CD4-positive, alpha-beta T cell (primary cell): ENCODE measurements at regions of chr13 and their contacts with region 1.

Region 1: DNA sequence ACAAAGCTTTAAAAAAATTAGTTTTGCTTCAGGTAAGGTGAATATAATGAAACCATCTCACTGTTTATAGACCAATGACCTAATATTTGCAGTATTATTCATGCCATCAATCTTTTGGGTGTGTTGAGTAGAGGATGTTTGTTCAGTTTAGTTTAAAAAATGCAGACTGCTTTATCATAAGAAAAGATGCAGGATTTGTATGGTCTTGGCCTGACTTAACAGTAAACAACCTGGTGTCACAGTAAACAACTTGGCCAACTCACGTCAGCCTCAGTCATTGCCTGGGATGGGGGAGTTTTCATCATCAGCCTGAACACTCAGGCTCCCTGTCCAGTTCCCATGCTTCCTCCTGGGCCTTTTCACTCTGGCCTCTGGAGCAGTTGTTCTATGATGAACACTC is 55.1 kb downstream of the LMO7 start:
- DNase-seq: no peak
- ATAC-seq: no peak
- H3K4me3 ChIP-seq: no peak overlapping the region
- H3K4me3 Mint-ChIP-seq: no peak overlapping the region
- H3K27ac ChIP-seq: no peak overlapping the region
- H3K27ac Mint-ChIP-seq: no peak overlapping the region
- H3K4me1 ChIP-seq: no peaks in the 10 kb centered on the region
- H3K4me1 Mint-ChIP-seq: no peaks in the 10 kb centered on the region
- H3K27me3 ChIP-seq: no peaks in the 10 kb centered on the region
- H3K27me3 Mint-ChIP-seq: no peaks in the 10 kb centered on the region
- CTCF ChIP-seq: no peak

Region 2: GRCh38 chr13:75704579-75705320 is 13.6 kb after region 1 on chr13:
- CTCF ChIA-PET with region 1: interaction called, 10 read pairs
- POLR2A ChIA-PET with region 1: no interaction called
- intact Hi-C with region 1: no loop called
- DNase-seq: no peak
- ATAC-seq: no peak
- H3K4me3 ChIP-seq: no peak overlapping the region
- H3K4me3 Mint-ChIP-seq: no peak overlapping the region
- H3K27ac ChIP-seq: no peak overlapping the region
- H3K27ac Mint-ChIP-seq: no peak overlapping the region
- H3K4me1 ChIP-seq: no peaks in the 10 kb centered on the region
- H3K4me1 Mint-ChIP-seq: peaks cover 7% of the 10 kb centered on the region
- H3K27me3 ChIP-seq: no peaks in the 10 kb centered on the region
- H3K27me3 Mint-ChIP-seq: no peaks in the 10 kb centered on the region
- CTCF ChIP-seq: no peak

Region 3: DNA sequence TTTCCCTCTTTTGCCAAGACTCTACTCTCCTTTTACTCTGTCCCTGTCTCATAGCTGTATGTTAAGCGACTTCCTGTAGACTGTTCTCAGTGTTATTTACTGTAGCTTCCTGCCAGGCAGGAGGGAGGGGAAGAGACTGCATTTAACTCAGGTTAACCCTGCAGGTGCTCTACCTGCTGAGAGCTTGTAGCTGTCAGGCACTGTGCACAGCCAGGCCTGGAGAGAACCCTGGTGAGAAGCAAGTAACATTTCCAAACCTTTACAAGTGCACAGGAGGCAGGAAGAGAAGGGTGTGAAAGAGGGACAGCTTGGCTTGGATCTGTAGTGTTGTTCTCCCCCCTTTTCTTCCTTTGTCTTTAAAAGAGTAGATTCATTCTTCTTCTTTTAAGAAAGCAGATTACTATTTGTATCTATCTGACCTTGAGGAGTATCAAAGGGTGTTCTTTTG is 112.0 kb after region 1 on chr13:
- CTCF ChIA-PET with region 1: no interaction called
- POLR2A ChIA-PET with region 1: no interaction called
- intact Hi-C with region 1: loop called in 1 of 2 experiments (anchors 5 kb)
- DNase-seq: peak in 12 of 14 experiments; percentile 1 to 57 (median 29)
- ATAC-seq: peak; percentile 99
- H3K4me3 ChIP-seq: no peak overlapping the region
- H3K4me3 Mint-ChIP-seq: peak overlapping the region; percentile 31
- H3K27ac ChIP-seq: peak overlapping the region; percentile 5 to 35
- H3K27ac Mint-ChIP-seq: peak overlapping the region; percentile 82
- H3K4me1 ChIP-seq: peaks cover 9% of the 10 kb centered on the region
- H3K4me1 Mint-ChIP-seq: peaks cover 49% of the 10 kb centered on the region
- H3K27me3 ChIP-seq: no peaks in the 10 kb centered on the region
- H3K27me3 Mint-ChIP-seq: no peaks in the 10 kb centered on the region
- CTCF ChIP-seq: no peak

Region 4: GRCh38 chr13:75870397-75870903 is 179.3 kb after region 1 on chr13:
- CTCF ChIA-PET with region 1: interaction called, 13 read pairs
- POLR2A ChIA-PET with region 1: interaction called, 8 read pairs
- intact Hi-C with region 1: loop called (anchors 2 kb)
- DNase-seq: peak in 7 of 14 experiments; percentile 2 to 63 (median 39)
- ATAC-seq: peak; percentile 64
- H3K4me3 ChIP-seq: peak overlapping the region; percentile 44
- H3K4me3 Mint-ChIP-seq: peak overlapping the region; percentile 79
- H3K27ac ChIP-seq: peak overlapping the region; percentile 34 to 50
- H3K27ac Mint-ChIP-seq: peak overlapping the region; percentile 80
- H3K4me1 ChIP-seq: peaks cover 7% of the 10 kb centered on the region
- H3K4me1 Mint-ChIP-seq: peaks cover 17% of the 10 kb centered on the region
- H3K27me3 ChIP-seq: peaks cover 0 to 4% of the 10 kb centered on the region in 2 experiments
- H3K27me3 Mint-ChIP-seq: peaks cover 4% of the 10 kb centered on the region
- CTCF ChIP-seq: peak; percentile 86

Region 5: DNA sequence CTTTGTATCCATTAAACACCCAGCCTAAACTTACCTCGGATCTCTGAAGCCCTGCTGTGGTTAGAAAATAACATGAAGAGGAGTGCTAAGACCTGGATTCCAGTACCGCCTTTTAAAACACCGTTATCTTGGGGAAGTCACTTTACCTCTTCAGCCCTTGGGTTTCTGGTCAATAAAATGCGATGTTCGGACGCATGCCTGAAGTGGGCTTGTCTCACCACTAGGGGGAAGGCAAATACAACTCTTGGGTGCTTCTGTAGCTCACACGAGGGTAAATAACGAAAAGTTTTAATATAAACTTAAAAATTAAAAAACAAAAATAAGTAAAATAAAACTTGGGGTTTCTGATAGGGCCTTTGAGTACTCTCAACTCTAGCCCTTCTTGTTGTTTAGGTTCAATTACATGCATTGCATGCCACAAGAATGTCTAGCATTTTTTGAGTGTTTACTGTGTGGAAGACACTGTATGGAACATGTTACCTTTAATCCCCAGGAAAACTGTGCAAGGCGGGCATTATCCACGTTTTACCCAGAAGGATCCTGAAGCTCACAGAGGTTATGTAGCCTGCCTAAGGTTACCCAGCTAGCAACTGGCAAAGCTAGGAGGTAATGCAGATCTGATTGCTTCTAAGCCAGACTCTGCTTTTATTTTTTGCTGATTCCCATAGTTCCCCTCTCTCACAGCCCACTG is 185.3 kb after region 1 on chr13:
- CTCF ChIA-PET with region 1: interaction called, 13 read pairs
- POLR2A ChIA-PET with region 1: no interaction called
- intact Hi-C with region 1: loop called (anchors 2 kb)
- DNase-seq: peak; percentile 13 to 76 (median 32)
- ATAC-seq: peak; percentile 93
- H3K4me3 ChIP-seq: no peak overlapping the region
- H3K4me3 Mint-ChIP-seq: peak overlapping the region; percentile 52
- H3K27ac ChIP-seq: no peak overlapping the region
- H3K27ac Mint-ChIP-seq: no peak overlapping the region
- H3K4me1 ChIP-seq: peaks cover 10% of the 10 kb centered on the region
- H3K4me1 Mint-ChIP-seq: peaks cover 15% of the 10 kb centered on the region
- H3K27me3 ChIP-seq: no peaks in the 10 kb centered on the region
- H3K27me3 Mint-ChIP-seq: peaks cover 4% of the 10 kb centered on the region
- CTCF ChIP-seq: peak; percentile 89

Region 6: DNA sequence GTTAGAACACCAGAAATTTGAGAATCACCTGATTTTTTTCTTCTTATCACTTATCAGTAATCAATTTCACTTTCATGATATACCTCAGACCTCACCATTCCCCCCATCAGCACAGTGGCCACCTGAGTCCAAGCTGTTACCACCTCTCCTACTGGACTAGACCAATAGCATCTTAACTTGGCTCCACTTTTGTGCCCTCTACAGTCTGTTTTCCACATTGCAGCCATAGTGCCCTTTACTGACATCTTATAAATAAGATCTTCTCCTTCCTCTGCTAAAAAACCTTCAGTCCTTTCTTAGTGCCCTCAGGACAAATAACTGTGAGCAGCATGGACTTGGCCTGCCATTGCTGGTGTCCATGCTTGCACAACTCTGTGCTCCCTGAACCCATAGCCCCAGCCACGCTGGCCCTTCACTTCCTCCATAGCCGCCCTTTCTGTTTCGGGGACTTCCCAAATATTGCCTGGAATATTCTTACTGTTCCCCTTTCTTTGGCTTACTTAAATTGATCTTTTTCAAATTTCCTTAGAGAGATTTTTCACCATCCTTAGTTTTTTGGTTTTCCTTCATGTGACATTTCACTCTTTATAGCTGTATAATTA is 325.7 kb after region 1 on chr13:
- CTCF ChIA-PET with region 1: interaction called, 3 read pairs
- POLR2A ChIA-PET with region 1: no interaction called
- intact Hi-C with region 1: loop called (anchors 2 to 5 kb)
- DNase-seq: peak in 4 of 14 experiments; percentile 3 to 25 (median 13)
- ATAC-seq: no peak
- H3K4me3 ChIP-seq: no peak overlapping the region
- H3K4me3 Mint-ChIP-seq: no peak overlapping the region
- H3K27ac ChIP-seq: no peak overlapping the region
- H3K27ac Mint-ChIP-seq: no peak overlapping the region
- H3K4me1 ChIP-seq: no peaks in the 10 kb centered on the region
- H3K4me1 Mint-ChIP-seq: no peaks in the 10 kb centered on the region
- H3K27me3 ChIP-seq: no peaks in the 10 kb centered on the region
- H3K27me3 Mint-ChIP-seq: no peaks in the 10 kb centered on the region
- CTCF ChIP-seq: no peak

Region 7: GRCh38 chr13:76473552-76474134 is 782.5 kb after region 1 on chr13:
- CTCF ChIA-PET with region 1: interaction called, 5 read pairs
- POLR2A ChIA-PET with region 1: no interaction called
- intact Hi-C with region 1: loop called (anchors 1 to 2 kb)
- DNase-seq: peak; percentile 40 to 85 (median 60)
- ATAC-seq: peak; percentile 95
- H3K4me3 ChIP-seq: no peak overlapping the region
- H3K4me3 Mint-ChIP-seq: no peak overlapping the region
- H3K27ac ChIP-seq: no peak overlapping the region
- H3K27ac Mint-ChIP-seq: no peak overlapping the region
- H3K4me1 ChIP-seq: no peaks in the 10 kb centered on the region
- H3K4me1 Mint-ChIP-seq: no peaks in the 10 kb centered on the region
- H3K27me3 ChIP-seq: no peaks in the 10 kb centered on the region
- H3K27me3 Mint-ChIP-seq: peaks cover 14% of the 10 kb centered on the region
- CTCF ChIP-seq: peak; percentile 89